Breast epithelium (tissue), 4 donors: ENCODE measurements at regions of chr9 and their contacts with region 1.

Region 1: GRCh38 chr9:95715868-95716435 is 159.5 kb upstream of the ERCC6L2 start:
- DNase-seq: no peak
- H3K4me3 ChIP-seq: no peak overlapping the region
- H3K27ac ChIP-seq: no peak overlapping the region
- H3K4me1 ChIP-seq: no peaks in the 10 kb centered on the region
- H3K27me3 ChIP-seq: no peaks in the 10 kb centered on the region
- CTCF ChIP-seq: no peak
- POLR2A ChIP-seq: no peak

Region 2: DNA sequence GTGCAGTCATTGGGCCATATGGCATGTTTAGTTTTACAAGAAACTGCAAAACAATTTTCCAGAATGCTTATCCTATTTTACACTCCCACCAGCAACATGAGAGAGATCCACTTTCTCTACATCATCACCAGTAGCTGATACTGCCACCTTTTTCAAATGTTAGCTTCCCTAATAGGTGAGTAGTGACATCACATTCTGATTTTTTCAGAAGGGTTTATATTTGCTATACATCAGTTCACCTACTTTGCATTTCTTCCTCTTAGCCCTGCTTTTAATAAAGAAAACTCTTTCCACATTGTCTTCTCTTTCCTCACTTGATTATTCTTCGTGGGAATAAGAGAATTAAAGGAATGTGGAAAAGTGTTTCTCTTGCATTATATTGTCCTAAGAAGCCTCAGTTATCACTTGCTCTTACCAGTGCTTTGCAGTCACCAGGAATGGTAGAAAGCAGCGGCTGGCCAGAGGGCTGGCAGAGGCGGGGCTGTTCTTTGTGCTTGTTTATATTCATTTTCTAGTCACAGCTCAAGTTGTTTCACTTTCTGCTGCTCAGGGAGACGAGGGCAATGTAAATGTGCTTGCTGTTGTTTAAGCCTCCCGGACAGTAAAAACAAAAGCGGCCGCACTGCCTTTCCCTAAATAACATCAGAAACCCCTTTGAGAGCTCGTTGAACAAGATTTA is 421.2 kb after region 1 on chr9:
- intact Hi-C with region 1: no loop called
- DNase-seq: no peak
- H3K4me3 ChIP-seq: peak overlapping the region in 1 of 3 donors; percentile 33
- H3K27ac ChIP-seq: peak overlapping the region; percentile 2 to 10
- H3K4me1 ChIP-seq: no peaks in the 10 kb centered on the region
- H3K27me3 ChIP-seq: no peaks in the 10 kb centered on the region
- CTCF ChIP-seq: no peak
- POLR2A ChIP-seq: no peak

Region 3: GRCh38 chr9:97602430-97602829 is 1886.5 kb after region 1 on chr9:
- intact Hi-C with region 1: loop called (anchors 5 kb)
- DNase-seq: no peak
- H3K4me3 ChIP-seq: no peak overlapping the region
- H3K27ac ChIP-seq: no peak overlapping the region
- H3K4me1 ChIP-seq: no peaks in the 10 kb centered on the region
- H3K27me3 ChIP-seq: no peaks in the 10 kb centered on the region
- CTCF ChIP-seq: no peak
- POLR2A ChIP-seq: no peak